ENCODE measurements at regions of chr10 and their contacts with region 1.

Region 1: DNA sequence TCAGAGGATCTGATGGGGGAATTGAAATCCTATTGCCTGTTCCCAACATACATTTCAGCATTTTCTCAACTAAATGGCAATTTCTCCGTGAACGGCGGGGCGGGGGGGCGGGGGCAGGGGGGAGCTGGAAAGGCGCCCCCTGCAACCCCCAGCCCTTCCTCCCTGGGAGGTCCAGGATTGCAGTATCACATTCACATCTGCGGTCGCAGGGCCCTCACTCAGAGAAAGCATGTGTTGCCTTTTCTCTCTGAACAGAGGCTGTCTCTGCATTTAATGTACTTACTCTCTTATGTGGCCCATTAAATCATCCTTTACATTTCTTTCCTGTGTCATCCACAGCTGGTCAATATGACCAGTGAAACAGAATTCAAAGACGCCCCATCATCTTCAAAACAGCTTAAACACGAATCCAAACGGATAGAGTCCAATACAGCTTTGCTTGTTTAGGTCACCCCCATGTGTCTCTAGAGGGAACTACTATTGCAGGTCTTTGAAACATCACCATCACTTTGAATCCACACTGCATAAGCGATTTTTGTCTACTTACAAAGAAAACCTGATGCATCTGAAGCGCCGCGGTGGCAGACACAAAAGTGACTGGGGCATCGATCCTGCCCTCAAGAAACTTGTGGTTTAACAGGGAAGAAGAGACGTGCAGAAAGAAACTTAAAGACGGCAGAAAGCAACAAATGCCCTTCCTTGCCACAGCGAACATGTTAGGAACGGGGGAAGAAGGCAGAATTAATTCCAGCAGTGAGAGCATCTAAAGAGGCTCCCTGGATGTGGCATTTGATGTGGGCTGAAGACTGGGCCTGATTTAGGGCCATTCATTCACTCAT is 17.0 kb upstream of the ECHDC3 start:
- DNase-seq: peak; percentile 60
- ATAC-seq: peak; percentile 98
- H3K4me3 ChIP-seq: no peak overlapping the region
- H3K27ac ChIP-seq: no peak overlapping the region
- H3K4me1 ChIP-seq: peaks cover 3% of the 10 kb centered on the region
- H3K27me3 ChIP-seq: no peaks in the 10 kb centered on the region; a peak in 2 of 4 replicates
- CTCF ChIP-seq: peak; percentile 81 to 92 (median 90)
- EP300 ChIP-seq: no peak
- POLR2A ChIP-seq: no peak
- RAD21 ChIP-seq: peak; percentile 100

Region 2: GRCh38 chr10:11525503-11525902 is 199.7 kb before region 1 on chr10:
- CTCF ChIA-PET with region 1: interaction called, 38 read pairs
- POLR2A ChIA-PET with region 1: no interaction called
- RAD21 ChIA-PET with region 1: interaction called, 8 read pairs
- SMC1A ChIA-PET with region 1: interaction called, 3 read pairs
- in situ Hi-C with region 1: no loop called
- intact Hi-C with region 1: no loop called
- DNase-seq: no peak
- ATAC-seq: no peak
- H3K4me3 ChIP-seq: no peak overlapping the region
- H3K27ac ChIP-seq: no peak overlapping the region
- H3K4me1 ChIP-seq: peaks cover 14% of the 10 kb centered on the region
- H3K27me3 ChIP-seq: no peaks in the 10 kb centered on the region
- CTCF ChIP-seq: no peak
- EP300 ChIP-seq: no peak
- POLR2A ChIP-seq: no peak
- RAD21 ChIP-seq: no peak

Measured in GM12878 (cell line).